ENCODE measurements at regions of chr6 and their contacts with region 1.

Region 1: GRCh38 chr6:1987640-1988039 is 257.8 kb downstream of the GMDS start:
- DNase-seq: peak; percentile 70
- H3K4me3 Mint-ChIP-seq: no peak overlapping the region
- H3K27ac Mint-ChIP-seq: no peak overlapping the region
- H3K4me1 Mint-ChIP-seq: peaks cover 12% of the 10 kb centered on the region
- H3K27me3 Mint-ChIP-seq: no peaks in the 10 kb centered on the region
- CTCF ChIP-seq: no peak

Region 2: GRCh38 chr6:1952726-1953360 is 34.8 kb before region 1 on chr6:
- CTCF ChIA-PET with region 1: interaction called, 4 read pairs
- POLR2A ChIA-PET with region 1: interaction called, 7 read pairs
- intact Hi-C with region 1: loop called (anchors 2 kb)
- DNase-seq: peak; percentile 98
- H3K4me3 Mint-ChIP-seq: peak overlapping the region; percentile 68
- H3K27ac Mint-ChIP-seq: peak overlapping the region; percentile 100
- H3K4me1 Mint-ChIP-seq: peaks cover 18% of the 10 kb centered on the region
- H3K27me3 Mint-ChIP-seq: no peaks in the 10 kb centered on the region
- CTCF ChIP-seq: no peak